Sigmoid colon (tissue), 7 donors: ENCODE measurements at regions of chr22 and their contacts with region 1.

Region 1: DNA sequence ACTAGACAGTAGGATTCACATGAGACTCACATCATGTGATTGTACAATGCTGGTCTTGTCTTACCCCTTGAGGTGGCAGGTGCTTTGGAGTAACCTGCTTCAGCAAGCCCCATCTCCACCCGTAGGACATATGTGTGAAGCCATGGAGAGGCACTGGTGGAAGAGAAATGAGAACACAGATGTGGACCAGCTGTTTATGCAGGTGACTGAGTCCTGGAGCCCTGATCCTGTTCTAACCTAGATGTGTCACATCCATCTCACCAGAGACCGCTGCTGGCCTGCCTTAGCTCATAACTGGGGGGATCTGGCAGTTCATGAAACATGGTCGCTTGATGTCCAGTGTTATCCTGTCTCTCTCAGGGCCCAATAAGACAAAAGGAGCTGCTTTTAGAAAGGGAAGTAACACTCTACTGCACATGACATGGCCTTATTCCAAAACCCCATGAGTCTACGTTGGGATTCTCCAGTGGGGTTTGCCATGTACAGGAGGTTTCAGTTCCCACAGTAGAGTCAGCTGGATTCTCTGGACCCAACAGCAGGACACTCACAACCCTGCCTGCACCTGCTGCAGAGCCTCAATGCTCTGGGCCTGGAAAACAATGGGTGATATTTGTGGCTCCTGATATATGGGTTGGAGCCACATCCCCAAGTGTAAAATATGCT is 62.0 kb downstream of the GGTLC2 start:
- DNase-seq: no peak
- H3K4me3 ChIP-seq: no peak overlapping the region
- H3K27ac ChIP-seq: no peak overlapping the region
- H3K4me1 ChIP-seq: no peaks in the 10 kb centered on the region
- H3K27me3 ChIP-seq: no peaks in the 10 kb centered on the region
- CTCF ChIP-seq: no peak
- EP300 ChIP-seq: no peak
- POLR2A ChIP-seq: no peak

Region 2: GRCh38 chr22:22463855-22464540 is 242.4 kb before region 1 on chr22:
- intact Hi-C with region 1: no loop called
- DNase-seq: no peak
- H3K4me3 ChIP-seq: no peak overlapping the region
- H3K27ac ChIP-seq: no peak overlapping the region
- H3K4me1 ChIP-seq: no peaks in the 10 kb centered on the region
- H3K27me3 ChIP-seq: peaks cover 0 to 54% (median 19%) of the 10 kb centered on the region in 3 donors
- CTCF ChIP-seq: peak; percentile 29 to 53 (median 46)
- EP300 ChIP-seq: no peak
- POLR2A ChIP-seq: no peak

Region 3: DNA sequence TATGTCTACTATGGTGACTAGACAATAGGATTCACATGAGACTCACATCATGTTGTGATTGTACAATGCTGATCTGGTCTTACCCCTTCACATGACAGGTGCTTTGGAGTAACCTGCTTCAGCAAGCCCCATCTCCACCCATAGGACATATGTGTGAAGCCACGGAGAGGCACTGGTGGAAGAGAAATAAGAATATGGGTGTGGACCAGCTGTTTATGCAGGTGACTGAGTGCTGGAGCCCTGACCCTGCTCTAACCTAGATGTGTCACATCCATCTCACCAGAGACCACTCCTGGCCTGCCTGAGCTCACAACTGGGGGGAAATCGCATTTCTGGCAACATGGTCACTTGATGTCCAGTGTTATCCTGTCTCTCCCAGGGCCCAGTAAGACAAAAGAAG is 57.7 kb after region 1 on chr22:
- intact Hi-C with region 1: loop called (anchors 2 kb)
- DNase-seq: no peak
- H3K4me3 ChIP-seq: no peak overlapping the region
- H3K27ac ChIP-seq: no peak overlapping the region
- H3K4me1 ChIP-seq: no peaks in the 10 kb centered on the region
- H3K27me3 ChIP-seq: no peaks in the 10 kb centered on the region
- CTCF ChIP-seq: no peak
- EP300 ChIP-seq: no peak
- POLR2A ChIP-seq: no peak